Left ventricle myocardium inferior (tissue), 1 donor: ENCODE measurements at regions of chr1 and their contacts with region 1.

Region 1: GRCh38 chr1:155940531-155940992 is 876 bp upstream of the RXFP4 start:
- DNase-seq: no peak
- H3K4me3 ChIP-seq: peak overlapping the region; percentile 26
- H3K27ac ChIP-seq: peak overlapping the region; percentile 92
- H3K4me1 ChIP-seq: peaks cover 63% of the 10 kb centered on the region
- H3K27me3 ChIP-seq: no peaks in the 10 kb centered on the region
- CTCF ChIP-seq: no peak

Region 2: GRCh38 chr1:155989242-155990004 is 48.9 kb after region 1 on chr1:
- intact Hi-C with region 1: loop called (anchors 2 kb)
- DNase-seq: peak; percentile 70
- H3K4me3 ChIP-seq: peak overlapping the region; percentile 55
- H3K27ac ChIP-seq: peak overlapping the region; percentile 57
- H3K4me1 ChIP-seq: peaks cover 17% of the 10 kb centered on the region
- H3K27me3 ChIP-seq: no peaks in the 10 kb centered on the region
- CTCF ChIP-seq: peak; percentile 100